B cell (primary cell): ENCODE measurements at regions of chr10 and their contacts with region 1.

Region 1: DNA sequence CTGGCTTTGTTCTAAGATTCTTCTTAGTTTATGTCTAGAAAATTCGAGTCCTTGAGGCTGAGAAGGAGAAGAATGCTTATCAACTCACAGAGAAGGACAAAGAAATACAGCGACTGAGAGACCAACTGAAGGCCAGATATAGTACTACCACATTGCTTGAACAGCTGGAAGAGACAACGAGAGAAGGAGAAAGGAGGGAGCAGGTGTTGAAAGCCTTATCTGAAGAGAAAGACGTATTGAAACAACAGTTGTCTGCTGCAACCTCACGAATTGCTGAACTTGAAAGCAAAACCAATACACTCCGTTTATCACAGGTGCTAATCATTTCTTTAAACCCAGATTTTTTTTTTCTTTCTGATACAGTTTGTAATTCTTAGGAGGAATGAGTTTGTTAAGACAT is 6.7 kb downstream of the CEP55 start:
- DNase-seq: no peak
- ATAC-seq: no peak
- H3K4me3 ChIP-seq: no peak overlapping the region
- H3K4me3 Mint-ChIP-seq: peak overlapping the region; percentile 46
- H3K27ac ChIP-seq: no peak overlapping the region
- H3K27ac Mint-ChIP-seq: no peak overlapping the region
- H3K4me1 ChIP-seq: peaks cover 0 to 3% of the 10 kb centered on the region in 2 donors
- H3K4me1 Mint-ChIP-seq: peaks cover 6% of the 10 kb centered on the region
- H3K27me3 ChIP-seq: no peaks in the 10 kb centered on the region
- H3K27me3 Mint-ChIP-seq: no peaks in the 10 kb centered on the region
- CTCF ChIP-seq: no peak

Region 2: GRCh38 chr10:93515071-93516005 is 12.3 kb after region 1 on chr10:
- CTCF ChIA-PET with region 1: interaction called, 10 read pairs
- POLR2A ChIA-PET with region 1: no interaction called
- intact Hi-C with region 1: no loop called
- DNase-seq: no peak
- ATAC-seq: no peak
- H3K4me3 ChIP-seq: no peak overlapping the region
- H3K4me3 Mint-ChIP-seq: no peak overlapping the region
- H3K27ac ChIP-seq: no peak overlapping the region
- H3K27ac Mint-ChIP-seq: no peak overlapping the region
- H3K4me1 ChIP-seq: peaks cover 0 to 3% of the 10 kb centered on the region in 2 donors
- H3K4me1 Mint-ChIP-seq: peaks cover 9% of the 10 kb centered on the region
- H3K27me3 ChIP-seq: no peaks in the 10 kb centered on the region
- H3K27me3 Mint-ChIP-seq: no peaks in the 10 kb centered on the region
- CTCF ChIP-seq: no peak